Activated naive CD4-positive, alpha-beta T cell treated with anti-CD3 and anti-CD28 coated beads for 36 hours (primary cell): ENCODE measurements at regions of chr19 and their contacts with region 1.

Region 1: DNA sequence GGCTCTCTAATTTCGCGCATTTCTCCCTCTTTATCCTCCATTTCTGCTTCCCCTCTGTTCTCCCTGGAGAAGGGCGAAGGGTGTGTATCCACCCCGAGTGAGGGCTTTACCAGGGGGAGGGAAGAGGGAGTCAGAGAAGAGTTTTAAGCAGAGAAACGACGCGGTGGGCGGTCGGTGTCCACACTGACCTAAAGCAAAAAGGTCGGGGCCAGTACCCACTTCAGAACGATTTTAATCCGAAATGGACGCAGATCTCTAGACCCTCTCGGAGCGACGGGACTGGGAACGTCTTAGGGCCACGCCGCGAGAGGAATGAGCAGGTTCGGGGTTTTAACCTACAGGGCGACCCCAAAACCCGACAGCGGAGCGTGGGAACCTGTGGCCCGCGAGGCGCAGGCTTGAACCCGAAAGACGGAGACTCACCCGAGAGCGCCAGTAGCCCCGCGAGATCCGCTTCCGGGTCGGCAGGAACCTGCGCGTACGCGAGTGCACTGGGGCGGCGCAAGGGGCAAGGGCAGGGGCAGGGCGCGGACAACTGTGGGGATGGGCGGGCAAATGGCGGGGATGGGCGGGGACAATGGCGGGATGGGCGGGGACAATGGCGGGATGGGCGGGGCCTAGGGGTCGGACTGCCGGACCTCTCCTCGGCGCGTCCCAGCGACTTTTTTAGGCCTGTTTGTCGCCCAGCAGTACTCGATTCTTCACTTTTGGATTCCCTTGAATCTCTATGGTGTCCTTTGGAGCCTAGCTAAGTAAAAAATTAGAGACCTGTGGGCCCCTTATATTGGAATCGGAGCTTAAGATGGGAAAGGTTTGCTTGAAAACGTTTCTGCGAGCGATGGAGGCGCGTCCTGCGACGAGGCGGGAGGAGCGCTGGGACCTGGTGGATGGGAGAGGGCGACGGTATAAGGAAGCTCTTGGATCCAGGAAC is at the start of gene ZNF677:
- DNase-seq: peak; percentile 91
- H3K4me3 Mint-ChIP-seq: peak within 1 kb of the TSS; percentile 83
- H3K27ac Mint-ChIP-seq: no peak within 1 kb of the TSS
- H3K4me1 Mint-ChIP-seq: peaks cover 7% of the 10 kb centered on the region
- H3K27me3 Mint-ChIP-seq: peaks cover 8% of the 10 kb centered on the region
- total RNA-seq, gene ZNF677: 4.0 to 5.4 TPM

Region 2: DNA sequence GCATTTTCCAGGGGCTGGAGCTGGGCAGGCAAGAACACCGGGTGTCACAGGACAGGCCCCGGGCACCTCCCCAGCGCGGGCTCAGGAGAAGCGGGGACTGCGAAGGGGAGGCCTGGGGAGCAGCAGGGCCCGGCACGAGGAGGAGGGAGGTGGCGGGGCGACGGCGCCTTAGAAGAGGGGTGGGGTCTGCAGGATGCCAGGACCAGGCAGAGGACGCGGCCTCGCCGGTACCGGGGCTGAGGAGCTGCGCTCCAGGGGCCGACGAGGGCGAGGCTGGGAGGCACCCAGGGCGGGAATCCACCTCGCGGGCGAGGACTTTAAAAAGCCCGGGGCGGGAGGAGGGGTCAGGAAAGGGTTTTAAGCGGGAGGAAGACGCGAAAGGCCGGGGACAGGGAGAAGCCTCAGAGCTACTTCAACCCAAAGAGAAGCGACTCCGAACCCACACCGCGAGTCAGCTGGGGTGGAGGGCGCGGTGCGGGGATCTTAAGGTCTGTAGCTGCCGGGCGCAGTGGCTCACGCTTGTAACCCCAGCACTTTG is 96.5 kb before region 1 on chr19:
- CTCF ChIA-PET with region 1: no interaction called
- intact Hi-C with region 1: loop called (anchors 10 kb)
- DNase-seq: peak; percentile 60
- H3K4me3 Mint-ChIP-seq: peak overlapping the region; percentile 85
- H3K27ac Mint-ChIP-seq: peak overlapping the region; percentile 72
- H3K4me1 Mint-ChIP-seq: peaks cover 13% of the 10 kb centered on the region
- H3K27me3 Mint-ChIP-seq: no peaks in the 10 kb centered on the region

Region 3: GRCh38 chr19:53333463-53334449 is 79.1 kb after region 1 on chr19 and contains the start of gene ZNF845:
- CTCF ChIA-PET with region 1: no interaction called
- intact Hi-C with region 1: loop called (anchors 1 kb)
- DNase-seq: peak; percentile 97
- H3K4me3 Mint-ChIP-seq: peak within 1 kb of the TSS; percentile 97
- H3K27ac Mint-ChIP-seq: peak within 1 kb of the TSS; percentile 87
- H3K4me1 Mint-ChIP-seq: peaks cover 13% of the 10 kb centered on the region
- H3K27me3 Mint-ChIP-seq: peaks cover 6% of the 10 kb centered on the region
- total RNA-seq, gene ZNF845: 4.3 to 4.5 TPM

Region 4: GRCh38 chr19:53422551-53422950 is 167.9 kb after region 1 on chr19:
- CTCF ChIA-PET with region 1: no interaction called
- intact Hi-C with region 1: no loop called
- DNase-seq: no peak
- H3K4me3 Mint-ChIP-seq: no peak overlapping the region
- H3K27ac Mint-ChIP-seq: no peak overlapping the region
- H3K4me1 Mint-ChIP-seq: no peaks in the 10 kb centered on the region
- H3K27me3 Mint-ChIP-seq: peaks cover 2% of the 10 kb centered on the region